Activated CD8-positive, alpha-beta memory T cell treated with anti-CD3 and anti-CD28 coated beads, Interleukin-2, amount 10 ng/mL, durations not matched to agents 7 days and 5 days (primary cell): ENCODE measurements at regions of chr7 and their contacts with region 1.

Region 1: GRCh38 chr7:129091484-129092002 is 36.6 kb upstream of the TNPO3 start:
- DNase-seq: peak; percentile 92
- ATAC-seq: peak; percentile 75
- H3K4me3 Mint-ChIP-seq: no peak overlapping the region
- H3K27ac Mint-ChIP-seq: no peak overlapping the region
- H3K4me1 Mint-ChIP-seq: peaks cover 43% of the 10 kb centered on the region
- H3K27me3 Mint-ChIP-seq: peaks cover 8% of the 10 kb centered on the region

Region 2: GRCh38 chr7:128347647-128348097 is 743.9 kb before region 1 on chr7:
- CTCF ChIA-PET with region 1: no interaction called
- DNase-seq: peak; percentile 66
- ATAC-seq: no peak
- H3K4me3 Mint-ChIP-seq: no peak overlapping the region
- H3K27ac Mint-ChIP-seq: no peak overlapping the region
- H3K4me1 Mint-ChIP-seq: peaks cover 8% of the 10 kb centered on the region
- H3K27me3 Mint-ChIP-seq: peaks cover 33% of the 10 kb centered on the region

Region 3: GRCh38 chr7:128862571-128863432 is 228.7 kb before region 1 on chr7 and contains the start of gene ATP6V1F:
- CTCF ChIA-PET with region 1: interaction called, 17 read pairs
- DNase-seq: peak; percentile 99
- ATAC-seq: peak; percentile 93
- H3K4me3 Mint-ChIP-seq: peak within 1 kb of the TSS; percentile 88
- H3K27ac Mint-ChIP-seq: peak within 1 kb of the TSS; percentile 95
- H3K4me1 Mint-ChIP-seq: peaks cover 15% of the 10 kb centered on the region
- H3K27me3 Mint-ChIP-seq: no peaks in the 10 kb centered on the region
- total RNA-seq, gene ATP6V1F: 127 to 158 TPM

Region 4: GRCh38 chr7:128904381-128905197 is 187.0 kb before region 1 on chr7:
- CTCF ChIA-PET with region 1: interaction called, 23 read pairs
- DNase-seq: no peak
- ATAC-seq: peak; percentile 75
- H3K4me3 Mint-ChIP-seq: no peak overlapping the region
- H3K27ac Mint-ChIP-seq: no peak overlapping the region
- H3K4me1 Mint-ChIP-seq: no peaks in the 10 kb centered on the region
- H3K27me3 Mint-ChIP-seq: peaks cover 40% of the 10 kb centered on the region

Region 5: GRCh38 chr7:129006636-129007414 is 84.7 kb before region 1 on chr7:
- CTCF ChIA-PET with region 1: interaction called, 11 read pairs
- DNase-seq: no peak
- ATAC-seq: no peak
- H3K4me3 Mint-ChIP-seq: no peak overlapping the region
- H3K27ac Mint-ChIP-seq: no peak overlapping the region
- H3K4me1 Mint-ChIP-seq: peaks cover 26% of the 10 kb centered on the region
- H3K27me3 Mint-ChIP-seq: no peaks in the 10 kb centered on the region

Region 6: DNA sequence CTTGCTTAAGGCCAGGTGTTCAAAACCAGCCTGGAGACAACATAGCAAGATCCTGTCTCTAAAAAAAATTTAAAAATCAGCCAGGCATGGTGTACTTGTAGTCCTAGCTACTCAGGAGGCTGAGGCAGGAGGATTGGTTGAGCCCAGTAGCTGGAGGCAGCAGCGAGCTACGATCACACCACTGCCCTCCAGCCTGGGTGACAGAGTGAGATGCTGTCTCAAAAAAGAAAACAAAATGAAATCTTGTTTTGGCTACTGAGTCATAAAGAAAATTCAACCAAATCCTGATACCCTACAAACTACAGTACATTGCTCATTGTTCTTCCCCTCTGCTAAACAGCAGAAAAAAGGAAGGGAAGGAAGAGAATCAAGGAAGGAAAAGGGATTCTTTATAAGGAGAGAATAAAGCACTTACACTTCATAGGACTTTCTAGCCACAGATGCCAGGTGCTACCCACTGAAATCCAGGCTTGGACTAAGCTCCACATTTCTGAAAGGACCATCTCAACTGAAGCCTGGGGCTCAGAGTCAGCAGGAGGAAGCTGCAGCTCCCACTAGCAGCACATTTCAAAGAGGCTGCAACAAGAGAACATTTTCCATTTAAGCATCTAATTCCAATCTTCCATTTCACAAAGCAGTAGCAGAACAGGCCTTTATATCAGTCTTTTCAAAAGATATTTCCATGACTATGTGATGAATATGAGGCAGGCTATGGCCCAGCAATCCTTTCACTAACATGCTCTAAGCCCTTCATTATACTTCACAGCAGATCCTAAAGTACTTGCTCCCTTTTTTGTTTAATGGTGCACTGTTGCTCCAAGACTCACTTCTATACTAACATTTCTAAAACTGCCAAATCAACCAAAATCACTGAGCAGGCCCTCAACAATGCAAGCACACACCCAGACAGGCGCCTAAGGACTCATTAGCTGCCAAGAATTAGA is 50.1 kb before region 1 on chr7:
- CTCF ChIA-PET with region 1: interaction called, 10 read pairs
- DNase-seq: no peak
- ATAC-seq: peak; percentile 45
- H3K4me3 Mint-ChIP-seq: no peak overlapping the region
- H3K27ac Mint-ChIP-seq: peak overlapping the region; percentile 63
- H3K4me1 Mint-ChIP-seq: peaks cover 43% of the 10 kb centered on the region
- H3K27me3 Mint-ChIP-seq: no peaks in the 10 kb centered on the region

Region 7: DNA sequence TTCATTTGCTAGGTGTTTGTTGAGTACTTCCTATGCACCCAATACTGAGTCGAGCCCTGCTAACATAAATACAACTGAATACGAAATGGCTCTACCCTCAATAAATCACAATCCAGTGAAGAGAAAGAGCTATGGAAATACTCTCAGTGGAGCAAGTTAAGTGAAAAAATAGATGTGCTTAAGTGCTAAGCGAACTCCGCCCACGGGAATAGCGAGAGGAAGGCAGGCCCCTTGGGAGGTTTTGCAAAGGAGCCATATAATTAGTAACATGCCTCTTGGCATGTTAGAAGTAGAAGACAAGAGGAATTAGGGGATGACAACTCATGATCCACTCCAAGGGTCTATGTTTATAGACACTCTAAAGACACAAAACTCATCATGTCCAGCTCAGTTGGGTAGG is 10.2 kb after region 1 on chr7:
- CTCF ChIA-PET with region 1: interaction called, 13 read pairs
- DNase-seq: no peak
- ATAC-seq: no peak
- H3K4me3 Mint-ChIP-seq: no peak overlapping the region
- H3K27ac Mint-ChIP-seq: no peak overlapping the region
- H3K4me1 Mint-ChIP-seq: no peaks in the 10 kb centered on the region
- H3K27me3 Mint-ChIP-seq: peaks cover 22% of the 10 kb centered on the region

Region 8: GRCh38 chr7:129163875-129164544 is 72.5 kb after region 1 on chr7:
- CTCF ChIA-PET with region 1: interaction called, 11 read pairs
- DNase-seq: no peak
- ATAC-seq: peak; percentile 51
- H3K4me3 Mint-ChIP-seq: no peak overlapping the region
- H3K27ac Mint-ChIP-seq: no peak overlapping the region
- H3K4me1 Mint-ChIP-seq: peaks cover 3% of the 10 kb centered on the region
- H3K27me3 Mint-ChIP-seq: no peaks in the 10 kb centered on the region